Body of pancreas (tissue), 4 donors: ENCODE measurements at regions of chr1 and their contacts with region 1.

Region 1: DNA sequence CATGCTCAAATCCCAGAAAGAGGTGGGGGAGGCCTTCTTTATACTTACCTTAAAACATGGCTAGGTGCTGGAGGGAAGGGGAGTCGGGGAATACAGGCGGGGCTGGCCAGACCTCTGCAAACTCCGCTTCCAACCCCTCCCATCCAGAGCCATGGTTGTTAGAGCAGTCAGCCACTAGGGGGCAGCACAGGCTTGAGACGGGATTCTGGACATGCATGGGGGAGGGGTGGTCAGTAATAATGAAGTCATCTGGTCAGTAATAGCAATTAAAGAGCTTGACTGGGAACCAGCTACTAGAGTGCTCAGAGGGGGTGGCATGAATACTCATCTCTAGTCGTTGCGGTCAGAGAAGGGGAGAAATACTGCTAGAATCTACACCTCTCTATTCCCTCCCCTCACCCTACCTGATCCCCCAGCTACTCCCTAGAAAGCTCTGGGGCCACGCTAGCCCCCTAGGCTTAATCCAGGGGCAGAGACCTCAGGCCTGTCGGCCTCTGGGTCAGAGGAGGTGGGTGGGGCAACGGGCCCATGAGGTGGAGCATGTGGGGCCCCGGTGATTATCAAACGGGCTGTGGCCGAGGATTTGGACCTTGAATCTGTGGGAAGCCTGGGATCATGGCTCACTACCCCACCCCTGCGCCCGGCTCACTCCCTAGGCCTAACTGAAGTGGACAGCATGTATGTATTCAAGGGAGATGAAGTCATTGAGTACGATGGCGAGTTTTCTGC is 2.9 kb downstream of the CASQ1 start:
- DNase-seq: peak; percentile 88 to 91 (median 90)
- ATAC-seq: peak; percentile 90
- H3K4me3 ChIP-seq: no peak overlapping the region
- H3K27ac ChIP-seq: no peak overlapping the region
- H3K4me1 ChIP-seq: peaks cover 12% of the 10 kb centered on the region
- H3K27me3 ChIP-seq: no peaks in the 10 kb centered on the region
- CTCF ChIP-seq: peak; percentile 93 to 98 (median 97)
- POLR2A ChIP-seq: peak in 1 of 3 donors; percentile 16

Region 2: GRCh38 chr1:159900086-159900680 is 293.1 kb before region 1 on chr1 and contains the start of gene CFAP45:
- intact Hi-C with region 1: no loop called
- DNase-seq: peak; percentile 94 to 96 (median 96)
- ATAC-seq: peak; percentile 96
- H3K4me3 ChIP-seq: no peak within 1 kb of the TSS
- H3K27ac ChIP-seq: peak within 1 kb of the TSS; percentile 72 to 92 (median 86)
- H3K4me1 ChIP-seq: peaks cover 19% of the 10 kb centered on the region
- H3K27me3 ChIP-seq: no peaks in the 10 kb centered on the region
- CTCF ChIP-seq: peak in 1 of 7 experiments; percentile 15
- POLR2A ChIP-seq: peak in 2 of 3 donors; percentile 56 to 65
- total RNA-seq, gene CFAP45: not detected

Region 3: DNA sequence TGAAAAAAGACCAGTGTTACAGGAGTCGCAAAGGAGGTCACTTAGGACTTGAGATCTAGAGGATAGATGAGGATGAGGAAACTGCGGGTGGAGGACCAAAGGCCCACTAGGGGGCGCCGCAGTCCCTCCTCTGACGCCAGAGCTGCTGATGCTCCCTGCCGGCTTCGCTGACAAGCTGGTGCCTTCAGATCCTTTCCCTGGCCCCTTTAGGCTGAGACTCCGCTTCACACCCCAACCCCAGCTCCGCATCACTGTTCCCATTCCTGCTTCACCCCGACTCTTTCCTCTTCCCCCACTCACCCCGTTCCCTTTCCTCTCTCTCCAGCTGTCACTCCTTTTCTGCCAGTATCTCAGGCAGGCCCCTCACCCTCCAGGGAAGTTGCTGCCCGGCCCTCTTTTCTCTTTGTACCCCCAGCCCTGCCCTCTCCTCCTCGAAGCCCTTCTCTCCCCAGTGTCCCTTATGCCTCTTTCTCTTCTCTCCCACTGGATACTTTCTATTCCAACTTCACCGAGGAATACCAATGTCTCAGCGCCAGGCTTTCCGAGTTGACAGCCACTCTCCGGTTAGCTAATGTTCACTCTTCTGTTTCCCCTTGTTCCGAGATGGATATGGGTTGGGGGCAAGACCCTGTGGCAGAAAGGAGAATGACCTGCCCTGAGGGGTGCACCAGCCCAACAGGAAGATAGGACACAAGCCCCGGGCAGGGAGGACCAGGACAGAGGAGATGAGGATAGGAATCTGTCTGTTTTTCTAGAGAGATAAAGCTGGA is 107.4 kb before region 1 on chr1:
- intact Hi-C with region 1: no loop called
- DNase-seq: peak; percentile 77 to 87 (median 81)
- ATAC-seq: peak; percentile 43
- H3K4me3 ChIP-seq: no peak overlapping the region
- H3K27ac ChIP-seq: no peak overlapping the region
- H3K4me1 ChIP-seq: peaks cover 15% of the 10 kb centered on the region
- H3K27me3 ChIP-seq: peaks cover 0 to 8% of the 10 kb centered on the region in 2 donors
- CTCF ChIP-seq: peak; percentile 65 to 86 (median 76)
- POLR2A ChIP-seq: no peak

Region 4: GRCh38 chr1:160251687-160252526 is 58.7 kb after region 1 on chr1:
- intact Hi-C with region 1: loop called (anchors 10 kb)
- DNase-seq: peak; percentile 76 to 87 (median 85)
- ATAC-seq: peak; percentile 94
- H3K4me3 ChIP-seq: no peak overlapping the region
- H3K27ac ChIP-seq: peak overlapping the region; percentile 18 to 42 (median 34)
- H3K4me1 ChIP-seq: peaks cover 47% of the 10 kb centered on the region
- H3K27me3 ChIP-seq: no peaks in the 10 kb centered on the region
- CTCF ChIP-seq: peak; percentile 45 to 95 (median 80)
- POLR2A ChIP-seq: peak in 1 of 3 donors; percentile 5

Region 5: DNA sequence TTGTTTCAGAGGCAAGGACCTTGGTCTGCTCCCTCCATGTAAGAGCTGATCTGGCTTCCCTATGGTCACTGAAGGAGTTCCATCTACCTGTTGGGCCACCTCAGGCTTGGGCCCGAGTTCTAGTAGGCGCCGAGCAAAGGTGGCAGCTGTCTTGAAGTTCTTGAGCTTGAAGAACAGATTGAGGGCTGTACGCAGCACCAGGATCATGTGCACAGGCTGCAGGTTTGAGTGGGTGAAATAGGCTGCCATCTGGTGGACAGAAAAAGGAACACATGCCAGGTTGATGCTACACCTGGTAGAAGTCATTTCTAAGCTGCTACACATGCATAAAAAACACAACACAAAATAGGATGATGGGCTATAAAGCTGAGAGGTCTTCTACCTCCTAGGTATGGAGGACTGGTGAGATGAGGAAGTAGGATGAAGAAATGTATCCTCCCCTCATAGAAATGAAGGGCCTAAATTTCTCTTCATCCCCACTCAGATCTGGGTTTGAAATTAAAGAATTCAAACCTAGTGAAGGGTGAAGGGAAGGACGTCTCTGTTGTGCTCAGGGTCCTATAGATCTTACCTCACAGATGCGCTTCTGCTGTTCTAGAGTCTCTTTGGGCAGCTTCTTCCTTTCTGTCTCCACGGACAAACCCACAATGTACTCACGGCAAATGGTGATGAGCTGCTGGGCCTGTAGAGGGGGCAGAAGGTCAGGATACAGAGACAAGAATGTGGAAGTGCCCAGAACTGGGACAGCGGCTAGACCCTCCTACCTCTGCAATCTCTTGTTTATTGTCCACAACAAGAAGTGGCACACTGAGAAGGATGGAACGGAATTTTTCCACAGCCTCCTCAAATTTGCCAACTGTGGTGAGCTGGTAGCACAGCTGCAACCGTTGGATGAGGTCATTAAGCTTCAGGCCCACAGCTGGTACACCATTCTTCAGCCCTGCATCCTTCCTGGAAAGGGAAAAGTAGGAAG is 98.3 kb after region 1 on chr1:
- intact Hi-C with region 1: loop called (anchors 10 kb)
- DNase-seq: peak; percentile 76 to 81 (median 78)
- ATAC-seq: peak; percentile 93
- H3K4me3 ChIP-seq: no peak overlapping the region
- H3K27ac ChIP-seq: no peak overlapping the region
- H3K4me1 ChIP-seq: no peaks in the 10 kb centered on the region
- H3K27me3 ChIP-seq: no peaks in the 10 kb centered on the region
- CTCF ChIP-seq: peak; percentile 65 to 86 (median 80)
- POLR2A ChIP-seq: no peak

Region 6: GRCh38 chr1:160354388-160354985 is 161.2 kb after region 1 on chr1:
- intact Hi-C with region 1: no loop called
- DNase-seq: no peak
- ATAC-seq: no peak
- H3K4me3 ChIP-seq: no peak overlapping the region
- H3K27ac ChIP-seq: no peak overlapping the region
- H3K4me1 ChIP-seq: no peaks in the 10 kb centered on the region
- H3K27me3 ChIP-seq: no peaks in the 10 kb centered on the region
- CTCF ChIP-seq: peak in 6 of 7 experiments; percentile 7 to 24 (median 14)
- POLR2A ChIP-seq: no peak

Region 7: DNA sequence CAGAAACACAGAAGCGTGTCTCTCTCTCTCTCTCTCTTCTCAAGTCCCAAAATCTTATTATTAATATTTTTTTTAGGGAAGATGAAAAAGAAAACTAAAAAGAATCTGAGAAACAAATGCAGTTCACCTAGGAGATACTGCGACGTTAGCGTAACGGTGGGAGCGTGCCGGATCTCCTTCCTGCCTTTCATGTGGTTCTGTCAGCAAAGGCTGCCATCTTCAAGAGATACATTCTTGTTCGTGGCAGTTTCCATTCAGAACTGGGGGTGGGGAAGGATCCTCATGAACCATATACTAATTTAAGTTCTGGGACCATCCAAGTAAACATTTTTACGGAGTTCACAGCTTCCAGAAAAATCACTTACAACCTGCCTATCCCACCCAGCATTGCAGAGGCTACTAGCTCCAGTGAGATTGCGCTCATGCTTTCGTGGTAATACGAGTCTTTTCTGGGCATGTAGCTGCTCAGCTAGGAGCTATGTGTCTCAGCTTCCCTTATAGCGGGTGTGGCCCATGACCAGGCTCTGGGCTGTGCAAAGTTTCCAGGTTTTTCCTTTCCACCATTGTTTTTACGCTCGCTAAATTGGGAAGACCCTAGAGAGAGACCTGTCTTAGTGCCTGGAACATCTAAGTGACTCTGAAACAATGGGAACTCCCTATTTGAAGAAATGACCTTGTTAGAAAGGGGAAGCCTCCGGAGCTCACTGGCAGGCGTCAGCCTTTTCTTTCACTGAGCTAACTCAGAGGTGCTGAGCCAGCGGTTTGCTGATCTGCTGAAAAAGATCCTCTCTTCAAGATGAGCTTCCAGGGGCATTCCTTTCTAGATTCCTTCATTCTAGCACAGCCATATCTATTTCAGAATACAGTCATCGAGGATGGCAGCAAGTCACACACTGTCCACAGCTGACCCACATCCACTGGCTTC is 436.3 kb after region 1 on chr1:
- intact Hi-C with region 1: no loop called
- DNase-seq: peak in 1 of 4 donors; percentile 62
- ATAC-seq: no peak
- H3K4me3 ChIP-seq: no peak overlapping the region
- H3K27ac ChIP-seq: peak overlapping the region in 1 of 4 donors; percentile 26
- H3K4me1 ChIP-seq: no peaks in the 10 kb centered on the region
- H3K27me3 ChIP-seq: no peaks in the 10 kb centered on the region
- CTCF ChIP-seq: no peak
- POLR2A ChIP-seq: no peak